PC-3 (cell line): ENCODE measurements at regions of chr7 and their contacts with region 1.

Region 1: GRCh38 chr7:90403174-90404113 is at the start of gene CLDN12:
- DNase-seq: peak; percentile 88
- ATAC-seq: peak; percentile 98
- H3K4me3 ChIP-seq: peak within 1 kb of the TSS; percentile 76
- H3K27ac ChIP-seq: peak within 1 kb of the TSS; percentile 90
- H3K4me1 ChIP-seq: peaks cover 15% of the 10 kb centered on the region
- H3K27me3 ChIP-seq: no peaks in the 10 kb centered on the region
- CTCF ChIP-seq: no peak
- total RNA-seq, gene CLDN12: 12.7 and 14.7 TPM in 2 replicates

Region 2: DNA sequence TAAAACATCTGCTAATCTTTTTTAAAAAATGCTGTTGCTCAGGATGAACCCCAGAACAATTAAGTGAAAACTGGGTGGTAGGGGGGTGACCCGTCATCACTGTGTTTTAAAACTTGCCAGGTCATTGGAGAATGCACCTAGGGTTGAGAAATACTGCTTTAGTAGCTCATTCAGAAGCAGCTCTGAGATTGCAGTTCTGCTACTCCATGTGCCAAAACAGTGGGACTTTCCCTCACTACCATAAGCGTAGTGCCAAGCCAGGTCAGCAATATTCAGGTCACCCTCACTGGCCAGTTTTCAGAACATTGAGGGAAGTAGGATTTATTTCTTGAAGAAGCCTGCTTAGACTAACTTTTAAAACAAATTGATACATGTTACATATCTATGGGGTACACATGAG is 186.7 kb before region 1 on chr7:
- CTCF ChIA-PET with region 1: no interaction called
- POLR2A ChIA-PET with region 1: interaction called, 20 read pairs
- intact Hi-C with region 1: no loop called
- DNase-seq: no peak
- ATAC-seq: no peak
- H3K4me3 ChIP-seq: no peak overlapping the region
- H3K27ac ChIP-seq: no peak overlapping the region
- H3K4me1 ChIP-seq: peaks cover 12% of the 10 kb centered on the region; the same call in 1 of the 2 replicates
- H3K27me3 ChIP-seq: no peaks in the 10 kb centered on the region
- CTCF ChIP-seq: no peak

Region 3: DNA sequence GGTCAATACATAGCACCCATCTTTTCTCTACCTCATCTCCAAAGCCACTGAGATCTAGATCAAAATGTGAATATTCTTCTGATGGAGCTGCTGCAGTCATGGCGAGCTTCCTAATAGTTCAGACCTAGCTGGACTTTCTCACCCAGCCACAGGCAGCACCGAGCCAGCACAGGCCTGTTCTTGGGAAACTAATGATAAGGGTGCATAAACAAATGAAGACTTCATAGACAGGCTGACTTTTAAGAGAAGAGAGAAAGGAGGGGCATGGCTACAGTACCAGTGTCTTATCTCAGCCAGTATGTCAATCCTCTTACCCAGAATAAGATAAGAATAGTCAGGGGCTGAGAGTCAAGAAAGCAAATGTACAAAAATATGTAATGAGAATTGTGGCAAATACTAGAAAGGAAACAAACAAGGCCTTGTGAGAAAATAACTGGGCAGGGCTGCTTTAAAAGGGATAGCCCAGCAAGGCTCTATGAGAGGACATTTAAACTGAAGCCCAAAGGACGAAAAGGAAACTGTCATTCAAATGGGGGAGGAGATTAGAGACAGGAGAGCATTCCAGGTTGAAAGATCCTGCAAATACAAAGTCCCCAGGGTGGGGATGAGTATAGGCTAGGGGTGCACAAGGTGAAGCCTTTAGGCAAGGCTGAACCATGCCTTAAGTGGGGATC is 170.8 kb after region 1 on chr7:
- CTCF ChIA-PET with region 1: no interaction called
- POLR2A ChIA-PET with region 1: no interaction called
- intact Hi-C with region 1: no loop called
- DNase-seq: no peak
- ATAC-seq: no peak
- H3K4me3 ChIP-seq: no peak overlapping the region
- H3K27ac ChIP-seq: no peak overlapping the region
- H3K4me1 ChIP-seq: peaks cover 6% of the 10 kb centered on the region
- H3K27me3 ChIP-seq: no peaks in the 10 kb centered on the region
- CTCF ChIP-seq: no peak

Region 4: DNA sequence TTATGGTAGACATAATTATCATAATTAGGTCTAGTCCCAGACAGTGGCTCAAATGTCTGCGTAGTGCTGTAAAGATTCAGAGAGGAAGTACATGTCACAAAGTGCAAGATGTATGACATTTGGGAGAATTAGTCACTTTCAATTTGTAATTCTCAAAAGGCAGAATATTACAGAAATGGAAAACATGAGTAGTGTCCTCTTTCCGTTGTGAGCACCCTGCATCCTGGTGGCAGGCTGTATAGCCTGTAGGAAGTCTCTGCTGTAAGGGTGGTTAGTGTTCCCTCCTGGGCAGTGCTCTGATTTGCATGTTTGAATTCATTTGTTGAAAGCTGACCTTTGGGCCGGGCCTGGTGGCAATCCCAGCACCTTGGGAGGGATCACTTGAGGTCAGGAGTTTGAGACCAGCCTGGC is 209.6 kb after region 1 on chr7:
- CTCF ChIA-PET with region 1: no interaction called
- POLR2A ChIA-PET with region 1: no interaction called
- intact Hi-C with region 1: no loop called
- DNase-seq: no peak
- ATAC-seq: peak; percentile 73
- H3K4me3 ChIP-seq: no peak overlapping the region
- H3K27ac ChIP-seq: no peak overlapping the region
- H3K4me1 ChIP-seq: peaks cover 3% of the 10 kb centered on the region; the same call in 1 of the 2 replicates
- H3K27me3 ChIP-seq: no peaks in the 10 kb centered on the region
- CTCF ChIP-seq: no peak